ENCODE measurements at regions of chr5 and their contacts with region 1.

Region 1: DNA sequence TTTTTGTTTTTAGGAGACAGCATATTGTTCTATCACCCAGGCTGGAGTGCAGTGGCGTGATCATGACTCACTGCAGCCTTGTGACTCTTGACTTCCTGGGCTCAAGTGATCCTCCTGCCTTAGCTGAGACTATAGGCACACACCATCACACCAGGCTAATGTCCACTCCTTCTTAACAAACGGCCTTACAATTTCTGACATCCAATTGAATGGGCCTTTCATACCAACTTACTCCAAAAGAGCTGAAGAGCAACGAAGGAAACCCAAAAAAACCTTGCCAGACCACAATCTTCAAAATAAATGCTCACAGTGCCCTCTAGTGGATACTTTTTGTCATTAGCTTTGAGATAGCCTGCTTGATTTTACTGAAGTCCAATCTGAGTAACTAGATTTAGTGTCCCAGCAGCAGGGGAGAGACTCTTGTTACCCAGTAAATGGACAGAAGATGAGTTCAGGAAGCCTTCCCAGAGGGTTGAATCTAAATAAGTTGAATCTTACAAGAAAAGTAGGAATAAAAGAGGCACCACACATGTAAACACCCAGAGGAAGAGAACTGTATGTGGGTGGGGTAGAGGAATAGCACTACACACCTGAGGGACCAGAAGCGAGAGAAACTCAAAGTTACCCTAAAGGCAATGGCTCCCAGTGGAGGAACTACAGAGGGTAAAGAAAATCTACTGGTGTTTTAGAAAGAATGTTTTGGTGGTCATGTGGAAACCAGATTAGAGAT is 9.3 kb downstream of the ZNF622 start:
- DNase-seq: peak; percentile 40 to 67
- ATAC-seq: peak; percentile 73 to 86
- H3K4me3 ChIP-seq: no peak overlapping the region
- H3K27ac ChIP-seq: peak overlapping the region in 1 of 2 experiments; percentile 52; a peak in 2 of 6 replicates
- H3K4me1 ChIP-seq: peaks cover 5% of the 10 kb centered on the region; the same call in 2 of the 3 replicates
- CTCF ChIP-seq: peak; percentile 82
- EP300 ChIP-seq: no peak
- POLR2A ChIP-seq: no peak
- RAD21 ChIP-seq: peak; percentile 54 to 60

Region 2: GRCh38 chr5:16437974-16438373 is 18.3 kb before region 1 on chr5:
- CTCF ChIA-PET with region 1: interaction called, 14 read pairs
- POLR2A ChIA-PET with region 1: no interaction called
- DNase-seq: peak; percentile 27 to 36
- ATAC-seq: peak; percentile 42 to 79; a peak in 3 of 6 replicates
- H3K4me3 ChIP-seq: no peak overlapping the region
- H3K27ac ChIP-seq: no peak overlapping the region
- H3K4me1 ChIP-seq: no peaks in the 10 kb centered on the region
- CTCF ChIP-seq: peak; percentile 24; the same call in 2 of the 3 replicates
- EP300 ChIP-seq: no peak
- POLR2A ChIP-seq: no peak
- RAD21 ChIP-seq: peak in 1 of 2 experiments; percentile 25; a peak in 1 of 5 replicates

Region 3: GRCh38 chr5:16467363-16468219 is 11.3 kb after region 1 on chr5:
- CTCF ChIA-PET with region 1: interaction called, 11 read pairs
- POLR2A ChIA-PET with region 1: interaction called, 3 read pairs
- DNase-seq: no peak
- ATAC-seq: no peak
- H3K4me3 ChIP-seq: no peak overlapping the region
- H3K27ac ChIP-seq: no peak overlapping the region; a peak in 1 of 6 replicates
- H3K4me1 ChIP-seq: peaks cover 34% of the 10 kb centered on the region
- CTCF ChIP-seq: no peak
- EP300 ChIP-seq: no peak
- POLR2A ChIP-seq: no peak
- RAD21 ChIP-seq: no peak

Measured in A549 (cell line).